Adrenal gland (tissue), 19 donors: ENCODE measurements at regions of chr2 and their contacts with region 1.

Region 1: GRCh38 chr2:149017116-149017985 is 21.1 kb upstream of the LYPD6B start:
- DNase-seq: peak; percentile 73 to 93 (median 81)
- H3K4me3 ChIP-seq: no peak overlapping the region
- H3K27ac ChIP-seq: no peak overlapping the region
- H3K4me1 ChIP-seq: peaks cover 0 to 6% of the 10 kb centered on the region in 2 donors
- H3K27me3 ChIP-seq: no peaks in the 10 kb centered on the region
- CTCF ChIP-seq: peak; percentile 67 to 93 (median 80)
- POLR2A ChIP-seq: no peak

Region 2: DNA sequence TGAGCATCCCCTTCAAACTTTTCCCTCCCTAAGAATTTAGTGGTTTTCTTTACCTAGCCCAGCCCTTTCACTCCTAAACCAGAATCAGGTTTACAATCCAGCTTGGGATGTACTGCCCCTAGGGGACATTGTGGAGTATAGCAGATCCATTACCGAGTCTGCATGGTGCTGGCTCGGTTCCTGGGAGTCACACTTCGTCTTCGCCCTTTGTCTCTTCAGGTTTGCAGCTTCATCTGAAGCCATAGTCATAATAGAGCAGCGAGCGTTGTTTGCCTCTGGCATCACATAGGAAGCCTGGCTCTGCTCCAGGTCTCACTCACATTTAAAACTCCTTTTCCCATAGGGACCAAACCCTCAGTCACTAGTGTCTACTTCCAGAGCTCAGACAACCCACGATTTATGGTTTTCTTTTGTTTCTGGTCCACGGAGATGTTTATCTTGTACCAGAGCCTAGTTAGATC is 296.2 kb after region 1 on chr2:
- intact Hi-C with region 1: loop called in 1 of 2 experiments (anchors 10 kb)
- DNase-seq: peak in 5 of 7 donors; percentile 27 to 54 (median 36)
- H3K4me3 ChIP-seq: no peak overlapping the region
- H3K27ac ChIP-seq: no peak overlapping the region
- H3K4me1 ChIP-seq: no peaks in the 10 kb centered on the region
- H3K27me3 ChIP-seq: peaks cover 4% of the 10 kb centered on the region
- CTCF ChIP-seq: peak; percentile 46 to 73 (median 62)
- POLR2A ChIP-seq: no peak

Region 3: DNA sequence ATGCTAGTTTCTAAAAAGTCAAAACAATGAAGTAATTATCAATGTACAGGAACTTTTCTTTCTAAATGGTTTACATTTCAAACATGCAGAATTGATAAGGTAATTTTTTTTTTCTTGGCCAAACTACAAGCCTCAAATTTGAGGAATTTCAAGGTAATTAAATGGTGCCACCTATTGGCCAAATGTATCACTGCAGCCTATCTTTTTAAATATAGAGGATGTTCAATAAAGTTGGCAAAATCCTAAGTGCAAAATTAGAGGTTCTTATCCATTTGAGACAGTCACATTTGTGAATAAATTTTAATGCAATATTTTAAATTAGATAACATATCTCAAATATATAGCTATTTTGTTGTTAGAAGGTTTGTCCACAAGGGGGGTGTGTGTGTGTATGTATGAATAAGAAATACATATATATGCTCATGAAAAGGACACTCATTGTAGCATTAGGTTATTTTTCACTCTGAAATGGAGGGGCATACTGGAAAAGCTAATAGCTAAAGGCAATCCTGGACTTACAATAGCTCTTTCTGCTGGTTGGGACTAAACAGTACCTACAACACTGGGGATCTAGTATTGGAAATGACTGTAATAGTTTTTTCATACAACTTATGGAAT is 544.1 kb after region 1 on chr2:
- intact Hi-C with region 1: loop called (anchors 5 to 10 kb)
- DNase-seq: peak in 2 of 7 donors; percentile 30 to 40
- H3K4me3 ChIP-seq: no peak overlapping the region
- H3K27ac ChIP-seq: no peak overlapping the region
- H3K4me1 ChIP-seq: peaks cover 0 to 11% of the 10 kb centered on the region in 2 donors
- H3K27me3 ChIP-seq: no peaks in the 10 kb centered on the region
- CTCF ChIP-seq: peak; percentile 64 to 94 (median 87)
- POLR2A ChIP-seq: no peak